Activated T-helper 2 cell treated with anti-CD3 and anti-CD28 coated beads, Interferon-gamma antibody, Interleukin-2, Interleukin-4, amounts not matched to agents 10 μg/mL and 5 μg/mL and 100 μg/mL, durations not matched to agents 14 hours and 24 hours and 36 hours (primary cell): ENCODE measurements at regions of chr7 and their contacts with region 1.

Region 1: DNA sequence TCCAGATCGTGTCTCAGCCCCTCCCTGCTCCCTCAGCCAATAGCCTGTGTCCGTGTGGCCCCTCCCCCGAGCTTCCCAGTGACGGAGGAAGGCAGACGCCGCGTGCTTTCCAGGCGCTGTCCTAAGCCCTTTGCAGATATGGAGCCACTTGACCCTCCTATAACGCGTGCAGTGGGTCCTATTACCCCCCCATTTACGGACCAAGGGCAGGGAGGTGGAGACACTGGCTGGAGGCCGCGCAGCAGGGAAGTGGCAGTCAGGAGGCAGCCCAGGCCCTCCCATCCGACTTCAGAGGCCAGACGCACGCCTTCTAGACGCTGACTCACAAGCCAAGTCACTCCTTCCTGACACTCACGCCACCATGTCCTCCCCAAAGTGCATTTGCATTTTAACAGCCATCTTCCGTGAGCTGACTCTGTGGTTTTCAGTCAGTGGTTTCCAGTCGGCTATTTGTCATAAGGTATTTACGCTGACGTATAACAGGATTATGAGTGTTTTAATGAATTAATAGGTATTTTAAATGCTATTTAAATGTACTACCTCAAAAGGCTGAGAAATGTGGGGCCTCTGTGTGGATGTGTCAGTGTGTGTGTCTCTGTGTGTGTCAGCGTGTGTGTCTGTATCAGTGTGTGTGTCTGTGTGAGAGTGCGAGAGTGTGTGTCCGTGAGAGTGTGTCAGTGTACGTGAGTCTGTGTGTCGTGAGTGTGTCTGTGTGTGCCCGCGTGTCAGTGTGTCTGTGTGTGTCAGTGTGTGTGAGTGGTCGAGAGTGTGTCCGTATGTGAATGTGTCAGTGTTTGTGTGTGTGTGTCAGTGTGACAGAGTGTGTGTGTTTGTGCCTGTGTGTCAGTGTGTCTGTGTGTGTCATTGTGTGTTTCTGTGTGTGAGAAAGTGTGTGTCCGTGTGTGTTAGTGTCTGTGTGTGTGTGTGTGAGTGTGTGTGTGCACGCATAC is 92.0 kb upstream of the INSIG1 start:
- DNase-seq: peak; percentile 92
- H3K4me3 Mint-ChIP-seq: peak overlapping the region; percentile 86
- H3K27ac Mint-ChIP-seq: peak overlapping the region; percentile 99
- H3K4me1 Mint-ChIP-seq: peaks cover 29% of the 10 kb centered on the region
- H3K27me3 Mint-ChIP-seq: no peaks in the 10 kb centered on the region

Region 2: GRCh38 chr7:154463794-154464193 is 741.8 kb before region 1 on chr7:
- intact Hi-C with region 1: no loop called
- DNase-seq: no peak
- H3K4me3 Mint-ChIP-seq: no peak overlapping the region
- H3K27ac Mint-ChIP-seq: no peak overlapping the region
- H3K4me1 Mint-ChIP-seq: no peaks in the 10 kb centered on the region
- H3K27me3 Mint-ChIP-seq: no peaks in the 10 kb centered on the region

Region 3: GRCh38 chr7:154927624-154928143 is 278.0 kb before region 1 on chr7:
- intact Hi-C with region 1: loop called (anchors 1 kb)
- DNase-seq: peak; percentile 59
- H3K4me3 Mint-ChIP-seq: peak overlapping the region; percentile 87
- H3K27ac Mint-ChIP-seq: peak overlapping the region; percentile 94
- H3K4me1 Mint-ChIP-seq: peaks cover 22% of the 10 kb centered on the region
- H3K27me3 Mint-ChIP-seq: peaks cover 18% of the 10 kb centered on the region

Region 4: GRCh38 chr7:155141562-155141961 is 64.1 kb before region 1 on chr7:
- intact Hi-C with region 1: no loop called
- DNase-seq: no peak
- H3K4me3 Mint-ChIP-seq: no peak overlapping the region
- H3K27ac Mint-ChIP-seq: no peak overlapping the region
- H3K4me1 Mint-ChIP-seq: peaks cover 3% of the 10 kb centered on the region
- H3K27me3 Mint-ChIP-seq: peaks cover 20% of the 10 kb centered on the region

Region 5: GRCh38 chr7:155190688-155191087 is 15.0 kb before region 1 on chr7:
- intact Hi-C with region 1: loop called (anchors 2 kb)
- DNase-seq: peak; percentile 51
- H3K4me3 Mint-ChIP-seq: peak overlapping the region; percentile 2
- H3K27ac Mint-ChIP-seq: no peak overlapping the region
- H3K4me1 Mint-ChIP-seq: peaks cover 41% of the 10 kb centered on the region
- H3K27me3 Mint-ChIP-seq: no peaks in the 10 kb centered on the region

Region 6: GRCh38 chr7:155277690-155277994 is 72.0 kb after region 1 on chr7:
- intact Hi-C with region 1: loop called (anchors 1 kb)
- DNase-seq: no peak
- H3K4me3 Mint-ChIP-seq: no peak overlapping the region
- H3K27ac Mint-ChIP-seq: no peak overlapping the region
- H3K4me1 Mint-ChIP-seq: peaks cover 54% of the 10 kb centered on the region
- H3K27me3 Mint-ChIP-seq: no peaks in the 10 kb centered on the region

Region 7: DNA sequence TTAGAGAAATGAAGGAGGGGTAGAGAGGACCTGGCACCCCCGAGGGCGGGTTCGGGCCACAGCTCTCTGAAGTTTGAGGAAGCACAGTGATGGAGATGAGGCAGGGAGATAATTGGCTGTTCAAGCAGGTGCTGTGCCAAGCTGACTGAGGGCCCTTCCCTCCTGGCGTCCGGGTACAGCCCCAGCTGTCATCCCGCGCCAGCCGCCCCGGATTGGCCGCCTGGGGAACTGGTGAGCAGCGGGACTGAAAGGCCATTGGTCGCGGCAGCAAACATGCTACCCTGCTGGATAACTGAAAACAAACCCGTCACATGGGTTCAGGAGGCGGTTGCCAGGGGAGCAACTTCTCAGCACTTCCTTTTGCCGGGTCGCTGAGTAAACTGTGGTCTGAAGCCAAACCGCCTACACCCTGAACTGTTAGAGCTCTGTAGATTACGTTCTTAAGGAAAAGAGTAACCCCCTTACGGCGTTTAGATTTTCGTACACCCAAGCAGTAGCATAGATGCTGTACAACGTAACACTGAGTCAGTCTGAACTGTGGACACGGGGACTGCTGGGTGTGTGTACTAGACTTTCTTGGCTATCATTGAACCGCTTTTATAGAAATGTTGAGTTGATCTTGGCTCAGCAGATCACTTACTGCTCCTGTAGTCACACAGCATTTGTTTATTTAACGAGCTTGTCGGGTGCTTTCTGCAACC is 93.3 kb after region 1 on chr7:
- intact Hi-C with region 1: loop called (anchors 1 kb)
- DNase-seq: peak; percentile 96
- H3K4me3 Mint-ChIP-seq: peak overlapping the region; percentile 96
- H3K27ac Mint-ChIP-seq: peak overlapping the region; percentile 95
- H3K4me1 Mint-ChIP-seq: peaks cover 59% of the 10 kb centered on the region
- H3K27me3 Mint-ChIP-seq: no peaks in the 10 kb centered on the region

Region 8: DNA sequence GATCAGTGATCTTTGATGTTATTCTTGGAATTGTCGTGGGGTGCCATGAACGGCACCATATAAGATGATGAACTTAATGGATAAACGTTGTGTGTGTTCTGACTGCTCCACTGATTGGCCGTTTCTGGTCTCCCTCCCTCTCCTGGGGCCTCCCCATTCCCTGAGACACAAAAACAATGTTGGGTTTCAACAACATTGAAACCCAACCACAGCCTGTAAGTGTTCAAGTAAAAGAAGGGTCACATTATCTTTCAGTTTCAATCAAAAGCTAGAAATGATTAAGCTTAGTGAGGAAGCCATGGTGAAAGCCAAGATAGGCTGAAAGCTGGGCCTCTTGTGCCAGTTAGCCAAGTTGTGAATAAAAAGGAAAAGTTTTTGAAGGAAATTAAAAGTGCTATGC is 271.8 kb after region 1 on chr7:
- intact Hi-C with region 1: loop called (anchors 10 kb)
- DNase-seq: no peak
- H3K4me3 Mint-ChIP-seq: no peak overlapping the region
- H3K27ac Mint-ChIP-seq: peak overlapping the region; percentile 47
- H3K4me1 Mint-ChIP-seq: peaks cover 13% of the 10 kb centered on the region
- H3K27me3 Mint-ChIP-seq: peaks cover 63% of the 10 kb centered on the region

Region 9: GRCh38 chr7:156773966-156774365 is 1568.3 kb after region 1 on chr7:
- intact Hi-C with region 1: loop called (anchors 10 kb)
- DNase-seq: no peak
- H3K4me3 Mint-ChIP-seq: no peak overlapping the region
- H3K27ac Mint-ChIP-seq: peak overlapping the region; percentile 73
- H3K4me1 Mint-ChIP-seq: peaks cover 61% of the 10 kb centered on the region
- H3K27me3 Mint-ChIP-seq: no peaks in the 10 kb centered on the region